ENCODE measurements at regions of chr1 and their contacts with region 1.

Region 1: GRCh38 chr1:109783429-109783831 is 19.7 kb upstream of the EPS8L3 start:
- DNase-seq: peak; percentile 51
- ATAC-seq: peak; percentile 80
- H3K4me3 ChIP-seq: peak overlapping the region in 1 of 2 experiments; percentile 14; a peak in 1 of 4 replicates
- H3K27ac ChIP-seq: peak overlapping the region; percentile 40; the same call in 1 of the 2 replicates
- H3K4me1 ChIP-seq: peaks cover 32 to 50% of the 10 kb centered on the region in 2 experiments
- H3K27me3 ChIP-seq: no peaks in the 10 kb centered on the region
- CTCF ChIP-seq: no peak
- POLR2A ChIP-seq: no peak
- RAD21 ChIP-seq: no peak

Region 2: DNA sequence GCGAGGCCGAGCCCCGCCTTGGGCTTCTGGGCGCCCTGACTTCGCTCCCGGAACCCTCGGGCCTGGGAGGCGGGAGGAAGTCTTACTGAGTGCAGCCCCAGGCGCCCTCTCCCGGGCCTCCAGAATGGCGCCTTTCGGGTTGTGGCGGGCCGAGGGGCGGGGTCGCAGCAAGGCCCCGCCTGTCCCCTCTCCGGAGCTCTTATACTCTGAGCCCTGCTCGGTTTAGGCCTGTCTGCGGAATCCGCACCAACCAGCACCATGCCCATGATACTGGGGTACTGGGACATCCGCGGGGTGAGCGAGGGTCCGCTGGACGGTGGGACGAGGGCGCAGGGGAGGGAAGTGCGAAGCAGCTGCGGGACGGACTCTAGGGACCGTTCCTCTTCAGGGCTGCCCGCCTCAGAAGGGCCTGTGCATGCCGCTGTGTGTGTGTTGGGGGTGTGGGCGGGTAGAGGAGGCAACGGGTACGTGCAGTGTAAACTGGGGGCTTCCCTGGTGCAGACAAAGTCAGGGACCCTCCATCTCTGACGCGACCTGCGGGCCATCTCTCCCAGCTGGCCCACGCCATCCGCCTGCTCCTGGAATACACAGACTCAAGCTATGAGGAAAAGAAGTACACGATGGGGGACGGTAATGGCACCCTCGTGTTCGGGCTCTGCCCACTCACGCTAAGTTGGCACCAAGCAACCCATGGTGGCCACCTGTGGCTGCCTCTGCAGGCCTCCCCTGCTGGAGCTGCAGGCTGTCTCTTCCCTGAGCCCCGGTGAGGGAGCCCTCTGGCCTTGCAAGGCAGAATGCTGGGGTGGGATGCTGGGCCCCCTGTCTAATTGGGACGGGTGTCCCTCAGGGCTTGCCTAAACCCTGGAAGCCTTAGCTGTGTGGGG is 95.6 kb before region 1 on chr1 and contains the start of gene GSTM1:
- CTCF ChIA-PET with region 1: no interaction called
- POLR2A ChIA-PET with region 1: no interaction called
- RAD21 ChIA-PET with region 1: no interaction called
- intact Hi-C with region 1: no loop called
- DNase-seq: no peak
- ATAC-seq: no peak
- H3K4me3 ChIP-seq: no peak within 1 kb of the TSS
- H3K27ac ChIP-seq: no peak within 1 kb of the TSS
- H3K4me1 ChIP-seq: no peaks in the 10 kb centered on the region
- H3K27me3 ChIP-seq: no peaks in the 10 kb centered on the region
- CTCF ChIP-seq: no peak
- POLR2A ChIP-seq: no peak
- RAD21 ChIP-seq: no peak
- total RNA-seq, gene GSTM1: not detected

Region 3: DNA sequence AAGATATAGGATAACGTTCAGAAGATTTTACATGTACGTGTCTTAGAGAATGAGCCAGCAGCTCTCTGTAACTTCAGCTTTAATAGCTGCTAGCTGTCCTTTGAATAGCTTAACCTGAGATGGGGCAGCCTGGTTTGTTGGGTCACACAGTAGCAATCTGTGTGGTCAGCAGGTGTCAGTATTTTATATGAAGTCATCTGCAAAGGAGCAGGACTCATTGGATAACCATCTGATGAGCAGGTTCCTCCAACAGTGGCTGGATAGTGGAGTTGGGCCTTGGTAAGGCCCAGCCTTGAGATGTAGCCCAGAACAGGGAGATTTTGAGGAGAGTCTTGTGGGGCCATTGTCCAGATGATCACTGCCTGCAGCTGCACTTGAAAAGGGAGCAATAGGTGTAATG is 64.9 kb before region 1 on chr1:
- CTCF ChIA-PET with region 1: no interaction called
- POLR2A ChIA-PET with region 1: no interaction called
- RAD21 ChIA-PET with region 1: no interaction called
- intact Hi-C with region 1: no loop called
- DNase-seq: peak; percentile 44
- ATAC-seq: peak; percentile 95
- H3K4me3 ChIP-seq: no peak overlapping the region
- H3K27ac ChIP-seq: no peak overlapping the region
- H3K4me1 ChIP-seq: peaks cover 0 to 14% of the 10 kb centered on the region in 2 experiments; a peak in 2 of 4 replicates
- H3K27me3 ChIP-seq: no peaks in the 10 kb centered on the region
- CTCF ChIP-seq: peak in 2 of 3 experiments; percentile 15 to 58; a peak in 3 of 6 replicates
- POLR2A ChIP-seq: no peak
- RAD21 ChIP-seq: peak; percentile 74

Region 4: GRCh38 chr1:109877320-109877771 is 93.9 kb after region 1 on chr1:
- CTCF ChIA-PET with region 1: no interaction called
- POLR2A ChIA-PET with region 1: no interaction called
- RAD21 ChIA-PET with region 1: no interaction called
- intact Hi-C with region 1: no loop called
- DNase-seq: no peak
- ATAC-seq: peak; percentile 54
- H3K4me3 ChIP-seq: no peak overlapping the region
- H3K27ac ChIP-seq: no peak overlapping the region
- H3K4me1 ChIP-seq: 0 out of 4 replicates have a peak, but pooled peaks cover 0 to under 1% of the 10 kb centered on the region in 2 experiments
- H3K27me3 ChIP-seq: 0 out of 2 replicates have a peak, but pooled peaks cover 5% of the 10 kb centered on the region
- CTCF ChIP-seq: no peak
- POLR2A ChIP-seq: no peak
- RAD21 ChIP-seq: no peak

Region 5: DNA sequence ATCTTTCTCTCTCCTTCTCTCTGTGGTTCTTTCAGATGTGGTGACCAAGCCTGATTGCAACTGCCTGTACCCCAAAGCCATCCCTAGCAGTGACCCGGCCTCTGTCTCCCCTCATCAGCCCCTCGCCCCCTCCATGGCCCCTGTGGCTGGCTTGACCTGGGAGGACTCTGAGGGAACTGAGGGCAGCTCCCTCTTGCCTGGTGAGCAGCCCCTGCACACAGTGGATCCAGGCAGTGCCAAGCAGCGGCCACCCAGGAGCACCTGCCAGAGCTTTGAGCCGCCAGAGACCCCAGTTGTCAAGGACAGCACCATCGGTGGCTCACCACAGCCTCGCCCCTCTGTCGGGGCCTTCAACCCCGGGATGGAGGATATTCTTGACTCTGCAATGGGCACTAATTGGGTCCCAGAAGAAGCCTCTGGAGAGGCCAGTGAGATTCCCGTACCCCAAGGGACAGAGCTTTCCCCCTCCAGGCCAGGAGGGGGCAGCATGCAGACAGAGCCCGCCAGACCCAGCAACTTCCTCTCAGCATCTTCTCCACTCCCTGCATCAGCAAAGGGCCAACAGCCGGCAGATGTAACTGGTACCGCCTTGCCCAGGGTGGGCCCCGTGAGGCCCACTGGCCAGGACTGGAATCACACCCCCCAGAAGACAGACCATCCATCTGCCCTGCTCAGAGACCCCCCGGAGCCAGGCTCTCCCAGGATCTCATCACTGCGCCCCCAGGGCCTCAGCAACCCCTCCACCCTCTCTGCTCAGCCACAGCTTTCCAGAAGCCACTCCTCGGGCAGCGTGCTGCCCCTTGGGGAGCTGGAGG is 139.9 kb after region 1 on chr1:
- CTCF ChIA-PET with region 1: no interaction called
- POLR2A ChIA-PET with region 1: no interaction called
- RAD21 ChIA-PET with region 1: no interaction called
- intact Hi-C with region 1: loop called (anchors 5 kb)
- DNase-seq: no peak
- ATAC-seq: peak; percentile 93
- H3K4me3 ChIP-seq: no peak overlapping the region
- H3K27ac ChIP-seq: no peak overlapping the region; the same call in 1 of the 2 replicates
- H3K4me1 ChIP-seq: no peaks in the 10 kb centered on the region
- H3K27me3 ChIP-seq: no peaks in the 10 kb centered on the region
- CTCF ChIP-seq: peak; percentile 24 to 69 (median 64); a peak in 5 of 6 replicates
- POLR2A ChIP-seq: no peak
- RAD21 ChIP-seq: peak; percentile 24; the same call in 1 of the 2 replicates

Region 6: DNA sequence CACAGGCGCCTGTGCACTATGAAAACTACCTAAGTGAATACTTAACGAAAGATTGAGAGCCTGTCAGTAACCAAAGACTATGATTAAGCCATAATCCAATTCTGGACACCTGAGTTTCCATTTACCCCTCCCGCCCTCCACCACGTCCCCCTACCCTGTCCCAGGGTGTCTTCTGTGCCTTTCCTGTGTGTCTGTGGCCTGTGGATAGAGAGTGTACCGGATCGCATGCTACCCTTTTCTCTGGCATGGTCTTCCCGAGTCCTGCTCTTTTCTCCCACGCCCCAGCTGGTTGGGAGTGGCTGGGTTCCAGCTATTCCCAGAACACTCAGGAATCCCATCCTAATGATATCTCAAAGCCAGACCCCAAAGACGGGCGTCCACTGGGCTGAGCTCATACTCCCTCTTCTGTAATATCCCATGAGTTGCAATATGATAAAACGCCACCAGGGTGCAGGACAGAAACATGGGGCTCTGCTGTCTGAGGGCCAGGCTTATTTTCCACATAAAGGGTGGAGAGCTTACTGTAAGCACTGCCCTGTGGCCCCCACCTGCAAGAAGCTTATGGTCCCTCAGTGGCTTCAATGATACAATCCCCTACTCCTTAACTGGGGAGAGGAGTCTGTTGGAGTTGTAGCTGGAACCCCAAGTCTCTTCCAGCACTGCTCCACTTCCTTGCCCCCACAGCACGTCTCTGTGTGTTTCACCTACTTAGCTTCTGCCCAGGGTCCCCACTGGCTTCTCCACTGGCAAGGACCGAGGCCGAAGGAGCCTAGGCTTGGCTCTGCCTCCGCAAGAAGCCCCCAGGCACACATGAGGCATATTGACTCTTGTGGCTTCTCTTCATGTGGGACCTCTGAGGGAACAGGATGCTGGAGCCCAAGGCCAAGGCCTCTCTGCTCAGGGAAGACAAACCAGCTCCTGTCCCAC is 304.6 kb after region 1 on chr1:
- CTCF ChIA-PET with region 1: no interaction called
- POLR2A ChIA-PET with region 1: no interaction called
- RAD21 ChIA-PET with region 1: no interaction called
- intact Hi-C with region 1: no loop called
- DNase-seq: peak; percentile 31
- ATAC-seq: peak; percentile 98
- H3K4me3 ChIP-seq: no peak overlapping the region
- H3K27ac ChIP-seq: no peak overlapping the region
- H3K4me1 ChIP-seq: no peaks in the 10 kb centered on the region
- H3K27me3 ChIP-seq: peaks cover 9% of the 10 kb centered on the region; the same call in 1 of the 2 replicates
- CTCF ChIP-seq: peak; percentile 58 to 74 (median 70)
- POLR2A ChIP-seq: no peak
- RAD21 ChIP-seq: peak; percentile 67